ENCODE measurements at regions of chr17 and their contacts with region 1.

Region 1: GRCh38 chr17:57939797-57940196 is 15.4 kb downstream of the CUEDC1 start:
- DNase-seq: no peak
- H3K4me3 ChIP-seq: no peak overlapping the region
- H3K27ac ChIP-seq: no peak overlapping the region
- H3K27me3 ChIP-seq: no peaks in the 10 kb centered on the region
- CTCF ChIP-seq: no peak

Region 2: DNA sequence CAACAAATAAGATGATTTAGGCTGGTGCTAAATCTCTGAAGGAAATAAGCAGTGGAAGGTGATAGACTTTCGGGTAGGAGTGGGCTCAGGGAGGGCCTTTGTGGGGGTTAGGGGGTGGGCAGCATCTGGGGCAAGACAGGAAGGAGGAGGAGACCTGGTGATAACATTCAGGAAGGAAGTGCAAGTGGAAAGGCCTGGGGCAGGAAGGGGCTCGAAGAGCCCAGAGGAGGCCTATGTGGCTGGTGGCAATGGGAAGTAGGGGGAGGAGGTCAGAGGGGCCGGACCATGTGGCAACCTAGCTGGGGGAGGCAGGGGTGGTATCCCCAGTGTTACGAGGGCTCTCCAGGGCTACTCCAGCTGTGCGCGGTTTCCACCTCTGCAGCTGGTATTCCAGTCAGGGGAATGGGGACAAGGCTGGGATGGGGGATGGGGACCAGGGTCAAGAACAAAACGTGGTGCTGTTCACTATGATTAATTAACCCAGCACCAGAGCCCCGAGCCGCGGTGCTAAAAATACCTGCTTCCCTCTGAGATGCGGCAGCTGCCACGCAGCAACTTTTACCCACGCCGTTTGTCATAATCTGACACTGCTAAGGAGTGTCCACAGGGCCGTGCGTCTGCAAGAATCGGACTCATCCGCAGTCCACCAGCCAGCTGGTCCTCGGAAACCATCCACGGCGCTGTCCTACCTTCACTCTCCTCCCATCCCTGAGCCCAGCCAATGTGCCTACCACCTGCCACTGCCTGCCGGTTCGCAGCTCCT is 189.5 kb before region 1 on chr17:
- CTCF ChIA-PET with region 1: no interaction called
- POLR2A ChIA-PET with region 1: no interaction called
- DNase-seq: no peak
- H3K4me3 ChIP-seq: no peak overlapping the region
- H3K27ac ChIP-seq: no peak overlapping the region
- H3K27me3 ChIP-seq: peaks cover 17% of the 10 kb centered on the region
- CTCF ChIP-seq: no peak

Region 3: DNA sequence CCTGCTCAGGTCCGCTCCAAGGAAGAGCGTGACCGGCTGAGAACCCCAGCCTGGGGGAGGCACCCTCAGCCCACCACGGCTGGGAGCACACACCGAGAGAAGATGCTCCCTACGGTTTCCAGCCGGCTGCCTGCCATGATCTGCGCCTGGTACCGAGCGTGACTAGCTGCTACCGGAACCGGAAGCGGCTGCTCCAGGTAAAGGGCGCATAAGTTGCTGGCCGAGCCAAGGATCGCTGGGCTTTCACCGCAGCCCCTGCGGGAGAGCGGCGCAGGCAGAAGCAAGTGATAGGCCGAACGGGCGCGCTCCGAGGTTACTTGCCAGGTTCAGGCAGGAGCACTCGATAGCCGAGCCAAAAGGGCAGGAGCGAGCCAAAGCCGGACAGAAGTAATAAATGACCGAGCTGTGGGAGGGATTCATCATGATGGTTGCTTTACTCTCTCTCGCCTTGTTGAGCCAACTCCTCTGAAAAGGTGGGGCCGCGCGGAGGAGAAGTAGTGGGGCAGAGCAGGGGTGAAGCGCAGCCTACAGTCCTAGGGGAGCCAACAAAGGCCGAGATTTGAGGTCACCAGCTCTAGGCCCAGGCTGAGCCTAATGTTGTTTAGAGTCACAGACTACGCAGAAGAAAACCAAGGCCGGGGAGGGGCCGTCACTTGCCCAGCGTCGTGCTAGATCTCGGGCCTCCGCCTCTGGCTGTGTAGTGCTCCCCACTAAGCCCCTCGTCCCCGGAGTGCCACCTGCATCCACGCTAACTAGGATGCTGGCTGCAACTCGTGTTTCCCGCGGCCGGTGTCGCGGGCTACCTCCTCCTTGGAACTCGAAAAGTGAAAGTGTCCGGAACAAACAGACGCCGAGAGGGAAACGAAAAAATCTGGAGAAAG is 89.7 kb before region 1 on chr17 and contains the start of gene MRPS23:
- CTCF ChIA-PET with region 1: interaction called, 4 read pairs
- POLR2A ChIA-PET with region 1: interaction called, 16 read pairs
- DNase-seq: peak; percentile 97
- H3K4me3 ChIP-seq: peak within 1 kb of the TSS; percentile 99
- H3K27ac ChIP-seq: peak within 1 kb of the TSS; percentile 85
- H3K27me3 ChIP-seq: no peaks in the 10 kb centered on the region
- CTCF ChIP-seq: no peak
- polyA plus RNA-seq, gene MRPS23: 27.5 and 34.1 TPM in 2 replicates

Region 4: GRCh38 chr17:57902800-57903759 is 36.7 kb before region 1 on chr17:
- CTCF ChIA-PET with region 1: interaction called, 3 read pairs
- POLR2A ChIA-PET with region 1: interaction called, 16 read pairs
- DNase-seq: no peak
- H3K4me3 ChIP-seq: no peak overlapping the region
- H3K27ac ChIP-seq: peak overlapping the region; percentile 80
- H3K27me3 ChIP-seq: no peaks in the 10 kb centered on the region
- CTCF ChIP-seq: no peak

Region 5: GRCh38 chr17:57955183-57955931 is 15.6 kb after region 1 on chr17 and contains the start of gene CUEDC1:
- CTCF ChIA-PET with region 1: interaction called, 4 read pairs
- POLR2A ChIA-PET with region 1: interaction called, 16 read pairs
- DNase-seq: no peak
- H3K4me3 ChIP-seq: peak within 1 kb of the TSS; percentile 74
- H3K27ac ChIP-seq: peak within 1 kb of the TSS; percentile 39
- H3K27me3 ChIP-seq: no peaks in the 10 kb centered on the region
- CTCF ChIP-seq: peak; percentile 29
- polyA plus RNA-seq, gene CUEDC1: 21.6 and 27.6 TPM in 2 replicates

Region 6: DNA sequence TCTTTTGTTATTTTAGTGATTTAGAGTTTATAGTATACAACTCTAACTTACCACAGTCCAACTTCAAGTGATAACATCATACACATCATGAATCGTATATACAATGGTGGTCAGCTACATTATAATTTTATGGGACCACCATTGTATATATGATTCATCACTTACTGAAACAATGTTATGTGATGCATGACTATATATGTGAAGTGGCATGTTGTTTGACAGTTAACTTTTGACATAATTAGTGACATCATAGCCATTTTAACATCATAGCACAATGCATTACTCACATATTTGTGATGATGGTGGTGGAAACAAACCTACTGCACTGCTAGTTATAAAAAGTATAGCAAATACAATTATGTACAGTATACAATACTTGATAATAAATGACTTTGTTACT is 165.3 kb after region 1 on chr17:
- CTCF ChIA-PET with region 1: no interaction called
- POLR2A ChIA-PET with region 1: no interaction called
- DNase-seq: no peak
- H3K4me3 ChIP-seq: no peak overlapping the region
- H3K27ac ChIP-seq: no peak overlapping the region
- H3K27me3 ChIP-seq: no peaks in the 10 kb centered on the region
- CTCF ChIP-seq: no peak

Measured in AG04450 (cell line).